Dorsolateral prefrontal cortex (tissue), 120 donors: ENCODE measurements at regions of chr18 and their contacts with region 1.

Region 1: GRCh38 chr18:55322178-55322735 is 265.7 kb downstream of the TCF4 start:
- DNase-seq: peak; percentile 65 to 88 (median 84)
- H3K4me3 ChIP-seq: peak overlapping the region; percentile 47 to 86 (median 75)
- H3K27ac ChIP-seq: peak overlapping the region; percentile 88 to 100 (median 99)
- H3K27me3 ChIP-seq: no peaks in the 10 kb centered on the region
- CTCF ChIP-seq: peak in 43 of 56 donors; percentile 6 to 57 (median 29)

Region 2: GRCh38 chr18:55096261-55096951 is 225.9 kb before region 1 on chr18:
- intact Hi-C with region 1: loop called in 1 of 2 experiments (anchors 10 kb)
- DNase-seq: peak; percentile 35 to 72 (median 59)
- H3K4me3 ChIP-seq: no peak overlapping the region
- H3K27ac ChIP-seq: peak overlapping the region in 1 of 59 donors; percentile 28
- H3K27me3 ChIP-seq: no peaks in the 10 kb centered on the region
- CTCF ChIP-seq: peak in 53 of 56 donors; percentile 17 to 70 (median 55)

Region 3: GRCh38 chr18:55337908-55338521 is 15.8 kb after region 1 on chr18:
- intact Hi-C with region 1: loop called in 1 of 2 experiments (anchors 2 kb)
- DNase-seq: peak in 7 of 10 donors; percentile 22 to 89 (median 50)
- H3K4me3 ChIP-seq: peak overlapping the region in 58 of 59 donors; percentile 14 to 61 (median 44)
- H3K27ac ChIP-seq: peak overlapping the region; percentile 73 to 100 (median 96)
- H3K27me3 ChIP-seq: no peaks in the 10 kb centered on the region
- CTCF ChIP-seq: peak in 10 of 56 donors; percentile 6 to 32 (median 12)

Region 4: GRCh38 chr18:55405893-55406406 is 83.7 kb after region 1 on chr18:
- intact Hi-C with region 1: loop called (anchors 2 kb)
- DNase-seq: peak; percentile 66 to 96 (median 90)
- H3K4me3 ChIP-seq: peak overlapping the region; percentile 26 to 76 (median 57)
- H3K27ac ChIP-seq: peak overlapping the region; percentile 88 to 100 (median 98)
- H3K27me3 ChIP-seq: no peaks in the 10 kb centered on the region
- CTCF ChIP-seq: peak in 24 of 56 donors; percentile 8 to 50 (median 20)

Region 5: GRCh38 chr18:55589625-55590291 is 267.5 kb after region 1 on chr18:
- intact Hi-C with region 1: loop called in 1 of 2 experiments (anchors 5 kb)
- DNase-seq: peak; percentile 92 to 96 (median 94)
- H3K4me3 ChIP-seq: peak overlapping the region; percentile 50 to 86 (median 72)
- H3K27ac ChIP-seq: peak overlapping the region; percentile 71 to 99 (median 96)
- H3K27me3 ChIP-seq: no peaks in the 10 kb centered on the region
- CTCF ChIP-seq: peak in 50 of 56 donors; percentile 4 to 63 (median 46)

Region 6: GRCh38 chr18:56511996-56512395 is 1189.7 kb after region 1 on chr18:
- intact Hi-C with region 1: no loop called
- DNase-seq: no peak
- H3K4me3 ChIP-seq: no peak overlapping the region
- H3K27ac ChIP-seq: no peak overlapping the region
- H3K27me3 ChIP-seq: no peaks in the 10 kb centered on the region
- CTCF ChIP-seq: no peak